ENCODE measurements at regions of chr7 and their contacts with region 1.

Region 1: DNA sequence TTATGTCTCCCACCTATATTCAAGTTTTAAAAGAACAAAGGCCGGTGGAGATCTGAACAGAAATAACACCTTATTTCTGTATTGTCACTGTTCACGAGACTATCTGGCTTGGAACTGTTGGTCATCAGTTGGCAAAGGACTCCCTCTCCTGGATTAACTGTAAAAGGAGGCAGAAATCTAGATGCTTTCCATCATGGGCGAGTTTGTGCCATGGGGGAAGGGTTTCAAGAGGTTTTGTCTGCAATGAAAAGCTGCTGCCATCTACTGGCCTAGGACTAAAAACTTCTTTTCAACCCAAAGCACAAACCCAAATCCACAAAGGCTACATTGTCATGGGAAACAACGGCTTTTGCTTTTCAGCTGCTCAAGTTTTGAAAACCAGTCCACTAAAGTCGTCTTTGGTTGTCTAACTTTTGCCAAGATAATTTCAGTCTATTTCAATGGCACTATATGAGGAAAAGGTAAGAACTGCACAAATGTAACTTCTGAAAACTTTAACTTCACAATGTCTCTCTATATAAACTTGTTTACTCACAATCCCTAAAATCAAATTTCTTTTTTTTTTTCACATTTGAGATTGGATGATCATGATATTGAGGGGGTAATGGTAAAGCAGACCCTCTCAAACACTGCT is 196.8 kb downstream of the SKAP2 start:
- DNase-seq: peak; percentile 86
- H3K4me3 ChIP-seq: no peak overlapping the region
- H3K27ac ChIP-seq: no peak overlapping the region
- H3K4me1 ChIP-seq: no peaks in the 10 kb centered on the region
- H3K27me3 ChIP-seq: no peaks in the 10 kb centered on the region
- CTCF ChIP-seq: peak; percentile 86 to 87

Region 2: DNA sequence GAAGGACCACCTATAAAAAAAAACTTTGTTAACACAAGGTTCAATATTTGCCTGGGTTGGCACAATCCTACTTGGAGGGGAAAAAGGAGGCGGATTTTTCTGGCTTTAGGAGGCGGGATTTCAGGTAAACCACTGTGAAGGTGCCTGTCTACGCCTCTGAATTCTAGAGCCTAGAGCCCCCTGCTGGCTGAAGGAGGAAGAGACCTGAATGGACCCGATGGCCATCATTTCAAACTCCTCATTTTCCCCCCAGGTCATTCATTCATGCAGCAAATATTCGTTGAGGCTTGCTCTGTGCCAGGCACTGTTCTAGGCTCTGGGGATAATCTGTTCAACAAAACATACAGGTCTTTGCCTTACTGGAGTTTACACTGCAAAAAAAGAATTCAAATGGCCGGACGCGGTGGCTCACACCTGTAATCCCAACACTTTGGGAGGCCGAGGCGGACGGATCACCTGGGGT is 605.9 kb before region 1 on chr7:
- CTCF ChIA-PET with region 1: no interaction called
- dilution Hi-C with region 1: no loop called
- in situ Hi-C with region 1: loop called in 1 of 2 experiments (anchors 25 kb)
- intact Hi-C with region 1: loop called (anchors 10 kb)
- DNase-seq: peak; percentile 56
- H3K4me3 ChIP-seq: no peak overlapping the region
- H3K27ac ChIP-seq: no peak overlapping the region
- H3K4me1 ChIP-seq: peaks cover 4% of the 10 kb centered on the region
- H3K27me3 ChIP-seq: no peaks in the 10 kb centered on the region
- CTCF ChIP-seq: peak; percentile 85 to 92

Region 3: DNA sequence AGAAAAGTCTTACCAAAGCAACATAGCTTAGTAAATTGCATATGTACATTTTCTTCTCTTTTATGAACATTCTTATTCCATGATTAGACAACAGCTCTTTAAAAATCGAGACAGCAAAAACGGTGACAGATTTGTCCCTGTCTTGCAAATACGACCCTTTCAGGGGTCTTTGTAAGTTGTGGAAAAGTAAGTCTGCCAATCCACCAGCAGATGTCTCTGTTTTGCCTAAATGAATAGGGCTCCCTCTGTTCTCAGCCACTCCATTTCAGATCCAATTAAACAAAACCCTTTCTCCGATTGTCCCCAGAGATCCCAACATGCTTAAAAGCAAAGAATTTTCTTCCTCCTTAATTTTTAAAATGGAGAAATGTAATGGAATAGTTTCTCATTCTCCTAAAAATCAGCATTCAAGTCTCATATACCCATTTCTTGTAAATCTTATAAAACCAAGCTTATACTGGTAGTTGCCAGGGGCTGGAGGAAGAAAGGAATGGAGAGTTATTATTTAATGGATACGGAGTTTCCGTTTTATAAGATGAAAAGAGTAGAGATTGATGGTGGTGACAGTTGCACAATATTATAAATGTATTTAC is 576.6 kb before region 1 on chr7:
- CTCF ChIA-PET with region 1: no interaction called
- dilution Hi-C with region 1: no loop called
- in situ Hi-C with region 1: no loop called
- intact Hi-C with region 1: loop called (anchors 5 kb)
- DNase-seq: peak; percentile 44
- H3K4me3 ChIP-seq: no peak overlapping the region
- H3K27ac ChIP-seq: no peak overlapping the region
- H3K4me1 ChIP-seq: peaks cover 33% of the 10 kb centered on the region
- H3K27me3 ChIP-seq: no peaks in the 10 kb centered on the region
- CTCF ChIP-seq: peak; percentile 56 to 77

Region 4: GRCh38 chr7:26200444-26201246 is 467.0 kb before region 1 on chr7 and contains the start of gene HNRNPA2B1:
- CTCF ChIA-PET with region 1: no interaction called
- dilution Hi-C with region 1: no loop called
- in situ Hi-C with region 1: no loop called
- intact Hi-C with region 1: loop called (anchors 2 kb)
- DNase-seq: peak; percentile 97
- H3K4me3 ChIP-seq: peak within 1 kb of the TSS; percentile 99 to 100 (median 100)
- H3K27ac ChIP-seq: peak within 1 kb of the TSS; percentile 93
- H3K4me1 ChIP-seq: peaks cover 28% of the 10 kb centered on the region
- H3K27me3 ChIP-seq: no peaks in the 10 kb centered on the region
- CTCF ChIP-seq: no peak
- total RNA-seq, gene HNRNPA2B1: 62.0 to 506 TPM

Region 5: GRCh38 chr7:26291699-26292538 is 375.7 kb before region 1 on chr7 and contains the start of gene SNX10:
- CTCF ChIA-PET with region 1: no interaction called
- dilution Hi-C with region 1: no loop called
- in situ Hi-C with region 1: no loop called
- intact Hi-C with region 1: loop called (anchors 5 kb)
- DNase-seq: peak; percentile 57
- H3K4me3 ChIP-seq: peak within 1 kb of the TSS; percentile 66 to 79 (median 67)
- H3K27ac ChIP-seq: peak within 1 kb of the TSS; percentile 46
- H3K4me1 ChIP-seq: peaks cover 3% of the 10 kb centered on the region
- H3K27me3 ChIP-seq: no peaks in the 10 kb centered on the region
- CTCF ChIP-seq: peak; percentile 6 to 45
- total RNA-seq, gene SNX10: 6.0 to 13.0 TPM

Region 6: GRCh38 chr7:26490650-26491624 is 176.7 kb before region 1 on chr7:
- CTCF ChIA-PET with region 1: interaction called, 6 read pairs
- dilution Hi-C with region 1: no loop called
- in situ Hi-C with region 1: no loop called
- intact Hi-C with region 1: loop called (anchors 1 kb)
- DNase-seq: peak; percentile 91
- H3K4me3 ChIP-seq: no peak overlapping the region
- H3K27ac ChIP-seq: no peak overlapping the region
- H3K4me1 ChIP-seq: peaks cover 17% of the 10 kb centered on the region
- H3K27me3 ChIP-seq: no peaks in the 10 kb centered on the region
- CTCF ChIP-seq: peak in 1 of 2 donors; percentile 40

Region 7: DNA sequence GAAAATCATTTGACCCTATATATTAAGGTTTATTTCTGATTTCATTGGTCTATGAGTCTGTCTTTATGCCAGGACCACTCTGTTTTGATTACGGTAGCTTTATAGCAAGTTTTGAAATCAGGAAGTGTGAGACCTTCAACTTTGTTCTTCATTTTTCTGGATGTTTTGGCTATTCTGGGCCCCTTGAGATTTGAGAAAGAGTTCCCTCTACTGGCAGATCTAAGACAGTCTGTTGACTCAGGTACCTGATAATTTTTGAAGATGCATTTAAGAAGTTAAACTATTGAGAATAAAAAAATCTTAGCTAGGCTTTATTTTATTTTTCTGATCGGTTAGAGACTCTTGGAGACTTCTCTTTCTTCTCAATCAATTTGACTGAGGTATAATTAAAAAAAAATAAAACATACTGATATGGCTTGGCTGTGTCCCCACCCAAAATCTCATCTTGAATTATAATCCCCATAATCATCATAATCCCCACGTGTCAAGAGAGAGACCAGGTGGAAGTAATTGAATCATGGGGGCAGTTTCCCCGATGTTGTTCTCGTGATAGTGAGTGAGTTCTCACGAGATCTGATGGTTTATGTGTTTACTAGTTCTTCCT is 166.8 kb before region 1 on chr7:
- CTCF ChIA-PET with region 1: no interaction called
- dilution Hi-C with region 1: no loop called
- in situ Hi-C with region 1: loop called (anchors 10 to 25 kb)
- intact Hi-C with region 1: no loop called
- DNase-seq: peak; percentile 27
- H3K4me3 ChIP-seq: no peak overlapping the region
- H3K27ac ChIP-seq: no peak overlapping the region
- H3K4me1 ChIP-seq: no peaks in the 10 kb centered on the region
- H3K27me3 ChIP-seq: no peaks in the 10 kb centered on the region
- CTCF ChIP-seq: peak; percentile 37 to 65

Region 8: DNA sequence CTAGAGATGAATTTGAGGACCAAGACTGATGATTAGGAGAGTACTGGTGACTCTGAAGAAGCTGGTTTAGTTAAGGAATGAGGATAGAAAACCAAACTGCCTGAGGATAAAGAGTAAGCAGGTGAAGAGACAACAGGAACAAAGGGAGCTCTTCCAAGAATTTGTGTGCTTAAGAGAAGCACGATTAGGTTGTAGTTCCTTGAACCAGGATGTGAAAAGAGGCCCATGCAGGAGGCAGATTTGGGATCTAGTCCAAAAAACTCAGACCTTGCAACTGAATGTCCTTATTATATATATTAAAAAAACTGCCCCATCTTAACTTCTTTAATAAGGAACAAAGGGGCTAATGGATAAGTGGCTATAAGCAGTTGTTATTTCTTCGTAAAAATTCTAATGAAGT is 46.4 kb after region 1 on chr7:
- CTCF ChIA-PET with region 1: no interaction called
- dilution Hi-C with region 1: no loop called
- in situ Hi-C with region 1: no loop called
- intact Hi-C with region 1: no loop called
- DNase-seq: no peak
- H3K4me3 ChIP-seq: no peak overlapping the region
- H3K27ac ChIP-seq: no peak overlapping the region
- H3K4me1 ChIP-seq: peaks cover 2% of the 10 kb centered on the region
- H3K27me3 ChIP-seq: no peaks in the 10 kb centered on the region
- CTCF ChIP-seq: no peak

Measured in mammary epithelial cell (primary cell).